B cell (primary cell): ENCODE measurements at regions of chr16 and their contacts with region 1.

Region 1: GRCh38 chr16:24041826-24042631 is 206.2 kb downstream of the PRKCB start:
- DNase-seq: peak; percentile 79
- ATAC-seq: peak; percentile 76
- H3K4me3 ChIP-seq: no peak overlapping the region
- H3K4me3 Mint-ChIP-seq: no peak overlapping the region
- H3K27ac ChIP-seq: peak overlapping the region in 1 of 2 donors; percentile 34
- H3K27ac Mint-ChIP-seq: peak overlapping the region; percentile 10
- H3K4me1 ChIP-seq: no peaks in the 10 kb centered on the region
- H3K4me1 Mint-ChIP-seq: peaks cover 14% of the 10 kb centered on the region
- H3K27me3 ChIP-seq: no peaks in the 10 kb centered on the region
- H3K27me3 Mint-ChIP-seq: no peaks in the 10 kb centered on the region
- CTCF ChIP-seq: peak; percentile 87

Region 2: DNA sequence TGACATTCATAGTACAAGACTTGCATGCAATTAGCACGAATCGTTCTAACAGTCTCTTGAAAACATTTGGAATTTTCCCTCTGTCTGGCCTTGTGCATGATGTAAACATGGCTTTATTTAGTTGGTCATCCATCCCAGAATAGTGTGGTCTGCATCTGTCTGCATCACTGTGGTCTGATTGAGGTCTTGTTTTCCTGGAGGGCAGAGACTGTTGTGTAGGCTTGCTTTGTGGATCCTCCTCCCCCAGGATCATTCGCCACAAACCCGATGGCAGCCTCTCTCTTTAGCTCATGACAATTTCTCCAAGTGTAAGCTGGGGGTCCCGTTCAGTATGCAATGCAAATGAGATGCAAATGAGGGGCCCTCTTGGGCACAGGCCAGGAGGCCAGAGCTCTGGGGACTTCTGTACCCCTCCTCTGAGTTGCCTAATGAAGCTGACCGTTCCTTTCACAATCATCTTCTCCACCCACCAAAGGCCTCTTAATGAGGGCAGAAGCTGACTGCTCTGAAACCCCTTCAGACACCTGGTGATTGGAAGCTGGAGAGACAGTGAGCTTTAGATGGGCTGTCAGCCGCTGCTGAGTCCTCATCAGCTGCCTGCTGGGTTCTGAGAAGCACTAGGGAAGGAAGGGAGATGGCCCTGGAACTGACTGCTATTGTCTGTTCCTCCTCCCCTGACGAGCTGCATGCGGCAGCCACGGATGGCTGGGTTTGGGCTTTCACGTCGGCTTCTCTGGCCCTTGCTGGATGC is 12.9 kb after region 1 on chr16:
- CTCF ChIA-PET with region 1: interaction called, 12 read pairs
- POLR2A ChIA-PET with region 1: no interaction called
- intact Hi-C with region 1: no loop called
- DNase-seq: no peak
- ATAC-seq: no peak
- H3K4me3 ChIP-seq: no peak overlapping the region
- H3K4me3 Mint-ChIP-seq: no peak overlapping the region
- H3K27ac ChIP-seq: no peak overlapping the region
- H3K27ac Mint-ChIP-seq: peak overlapping the region; percentile 66
- H3K4me1 ChIP-seq: no peaks in the 10 kb centered on the region
- H3K4me1 Mint-ChIP-seq: peaks cover 31% of the 10 kb centered on the region
- H3K27me3 ChIP-seq: no peaks in the 10 kb centered on the region
- H3K27me3 Mint-ChIP-seq: no peaks in the 10 kb centered on the region
- CTCF ChIP-seq: no peak

Region 3: DNA sequence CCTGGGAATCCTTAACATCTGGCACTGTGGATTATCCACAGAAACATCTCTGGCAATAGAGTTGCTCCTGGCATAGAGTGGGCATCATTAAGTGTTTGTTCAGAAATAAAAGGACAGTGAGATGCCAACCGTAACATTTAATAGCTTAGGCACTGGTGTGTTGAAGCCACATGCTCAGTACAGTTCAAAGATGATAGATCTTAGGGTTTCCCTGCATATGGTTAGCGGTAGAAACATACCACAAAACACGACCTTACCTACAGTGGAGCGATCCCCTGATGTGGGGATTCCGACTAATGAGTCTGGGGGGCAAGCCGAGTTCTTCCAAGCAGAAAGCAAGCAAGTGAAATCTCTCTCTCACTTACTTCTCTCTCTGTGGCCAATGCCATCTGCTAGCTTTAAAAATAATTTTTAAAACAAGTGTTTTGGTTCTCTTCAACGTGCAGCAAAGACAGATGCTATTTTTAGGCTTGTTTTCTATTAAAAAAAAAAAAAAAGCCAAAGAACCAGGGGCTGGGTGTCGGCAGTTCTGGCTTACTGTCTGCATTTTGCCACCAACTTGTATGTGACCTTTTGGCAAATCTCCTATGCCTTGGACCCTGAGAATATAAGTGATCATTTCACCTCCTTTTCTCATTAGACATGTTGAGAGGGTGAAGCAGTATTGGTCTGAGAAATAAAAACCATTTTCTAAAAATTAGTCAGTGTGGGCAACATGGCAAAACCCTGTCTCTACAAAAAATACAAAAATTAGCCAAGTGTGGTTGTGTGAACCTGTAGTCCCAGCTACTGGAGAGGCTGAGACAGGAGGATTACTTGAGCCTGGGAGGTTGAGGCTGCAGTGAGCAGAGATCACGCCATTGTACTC is 124.9 kb after region 1 on chr16:
- CTCF ChIA-PET with region 1: no interaction called
- POLR2A ChIA-PET with region 1: no interaction called
- intact Hi-C with region 1: loop called (anchors 5 kb)
- DNase-seq: no peak
- ATAC-seq: no peak
- H3K4me3 ChIP-seq: no peak overlapping the region
- H3K4me3 Mint-ChIP-seq: no peak overlapping the region
- H3K27ac ChIP-seq: peak overlapping the region in 1 of 2 donors; percentile 24
- H3K27ac Mint-ChIP-seq: peak overlapping the region; percentile 54
- H3K4me1 ChIP-seq: peaks cover 0 to 3% of the 10 kb centered on the region in 2 donors
- H3K4me1 Mint-ChIP-seq: peaks cover 14% of the 10 kb centered on the region
- H3K27me3 ChIP-seq: no peaks in the 10 kb centered on the region
- H3K27me3 Mint-ChIP-seq: no peaks in the 10 kb centered on the region
- CTCF ChIP-seq: no peak